ENCODE measurements at regions of chr21 and their contacts with region 1.

Region 1: DNA sequence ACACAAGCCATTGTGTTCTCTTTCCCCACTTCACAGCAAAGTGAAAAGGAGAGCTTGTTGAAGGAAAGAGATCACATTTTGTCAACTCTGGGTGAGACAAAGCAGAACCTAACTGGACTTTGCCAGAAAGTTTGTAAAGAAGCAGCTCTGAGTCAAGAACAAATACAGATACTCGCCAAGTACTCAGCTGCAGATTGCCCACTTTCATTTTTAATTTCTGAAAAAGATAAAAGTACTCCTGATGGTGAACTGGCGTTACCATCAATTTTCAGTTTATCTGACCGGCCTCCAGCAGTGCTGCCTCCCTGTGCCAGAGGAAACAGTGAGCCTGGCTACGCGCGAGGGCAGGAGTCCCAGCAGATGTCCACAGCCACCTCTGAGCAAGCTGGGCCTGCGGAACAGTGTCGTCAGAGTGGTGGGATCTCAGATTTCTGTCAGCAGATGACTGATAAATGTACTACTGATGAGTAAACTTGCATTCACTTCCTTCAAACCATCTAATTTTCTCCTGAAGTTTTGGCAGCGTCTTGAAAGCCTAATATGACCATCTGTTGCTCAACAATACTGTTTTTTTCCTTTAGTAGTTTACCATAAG is 43.7 kb downstream of the BACH1 start:
- DNase-seq: no peak
- H3K4me3 ChIP-seq: no peak overlapping the region
- H3K4me3 Mint-ChIP-seq: peak overlapping the region in 5 of 8 donors; percentile 11 to 58 (median 22)
- H3K27ac ChIP-seq: no peak overlapping the region
- H3K27ac Mint-ChIP-seq: peak overlapping the region in 5 of 7 donors; percentile 49 to 79 (median 58)
- H3K4me1 ChIP-seq: peaks cover 9% of the 10 kb centered on the region
- H3K4me1 Mint-ChIP-seq: peaks cover 13 to 19% (median 17%) of the 10 kb centered on the region in 4 donors
- H3K27me3 ChIP-seq: no peaks in the 10 kb centered on the region
- H3K27me3 Mint-ChIP-seq: no peaks in the 10 kb centered on the region

Region 2: GRCh38 chr21:29091032-29091431 is 251.4 kb before region 1 on chr21:
- CTCF ChIA-PET with region 1: interaction called, 26 read pairs
- POLR2A ChIA-PET with region 1: no interaction called
- intact Hi-C with region 1: no loop called
- DNase-seq: no peak
- H3K4me3 ChIP-seq: no peak overlapping the region
- H3K4me3 Mint-ChIP-seq: no peak overlapping the region
- H3K27ac ChIP-seq: no peak overlapping the region
- H3K27ac Mint-ChIP-seq: no peak overlapping the region
- H3K4me1 ChIP-seq: no peaks in the 10 kb centered on the region
- H3K4me1 Mint-ChIP-seq: no peaks in the 10 kb centered on the region
- H3K27me3 ChIP-seq: no peaks in the 10 kb centered on the region
- H3K27me3 Mint-ChIP-seq: no peaks in the 10 kb centered on the region

Region 3: DNA sequence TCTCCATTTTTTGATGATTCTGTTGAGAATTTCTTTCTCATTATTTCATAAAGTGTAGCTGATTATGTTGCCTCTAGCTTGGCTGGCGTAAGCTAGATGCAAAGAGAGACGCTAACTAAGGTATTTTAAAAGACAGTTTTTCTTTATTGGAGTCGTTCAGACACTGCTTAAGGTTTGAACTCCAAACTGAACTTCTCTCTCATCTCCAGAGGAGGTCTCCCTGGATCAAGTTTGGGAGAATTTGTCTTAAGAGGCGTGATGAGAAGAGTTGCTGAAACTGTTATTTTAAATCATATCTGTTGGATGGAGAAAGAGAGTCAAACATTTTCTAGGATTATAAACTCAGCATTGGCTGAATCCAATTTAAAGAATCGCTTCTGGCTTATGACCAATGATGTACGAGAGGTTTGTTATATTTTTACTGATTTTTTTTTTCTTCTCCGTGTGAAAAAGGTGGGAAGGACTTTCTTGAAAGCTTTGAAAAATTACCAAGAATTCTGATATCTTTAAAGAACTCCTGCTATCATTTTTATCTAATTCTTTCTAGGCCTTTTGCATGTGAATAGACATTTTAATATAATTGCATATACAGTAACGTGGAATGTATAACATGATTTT is 178.0 kb before region 1 on chr21:
- CTCF ChIA-PET with region 1: interaction called, 13 read pairs
- POLR2A ChIA-PET with region 1: no interaction called
- intact Hi-C with region 1: no loop called
- DNase-seq: no peak
- H3K4me3 ChIP-seq: no peak overlapping the region
- H3K4me3 Mint-ChIP-seq: no peak overlapping the region
- H3K27ac ChIP-seq: no peak overlapping the region
- H3K27ac Mint-ChIP-seq: no peak overlapping the region
- H3K4me1 ChIP-seq: no peaks in the 10 kb centered on the region
- H3K4me1 Mint-ChIP-seq: peaks cover 0 to 2% (median 0%) of the 10 kb centered on the region in 4 donors
- H3K27me3 ChIP-seq: no peaks in the 10 kb centered on the region
- H3K27me3 Mint-ChIP-seq: no peaks in the 10 kb centered on the region

Region 4: GRCh38 chr21:29195981-29196669 is 146.3 kb before region 1 on chr21:
- CTCF ChIA-PET with region 1: no interaction called
- POLR2A ChIA-PET with region 1: no interaction called
- intact Hi-C with region 1: loop called (anchors 10 kb)
- DNase-seq: peak; percentile 62 to 88 (median 70)
- H3K4me3 ChIP-seq: peak overlapping the region in 1 of 2 donors; percentile 42
- H3K4me3 Mint-ChIP-seq: peak overlapping the region; percentile 79 to 90 (median 84)
- H3K27ac ChIP-seq: no peak overlapping the region
- H3K27ac Mint-ChIP-seq: peak overlapping the region; percentile 84 to 96 (median 90)
- H3K4me1 ChIP-seq: peaks cover 22% of the 10 kb centered on the region
- H3K4me1 Mint-ChIP-seq: peaks cover 10 to 19% (median 17%) of the 10 kb centered on the region in 4 donors
- H3K27me3 ChIP-seq: no peaks in the 10 kb centered on the region
- H3K27me3 Mint-ChIP-seq: peaks cover 0 to 3% of the 10 kb centered on the region in 2 donors

Measured in CD4-positive, alpha-beta memory T cell (primary cell).